Posterior cingulate gyrus (tissue), 11 donors: ENCODE measurements at regions of chr5 and their contacts with region 1.

Region 1: GRCh38 chr5:135887351-135887864 is 8.2 kb downstream of the IL9 start:
- DNase-seq: peak in 9 of 10 donors; percentile 29 to 93 (median 65)

Region 2: GRCh38 chr5:135821061-135821801 is 66.2 kb before region 1 on chr5:
- intact Hi-C with region 1: no loop called
- DNase-seq: peak in 1 of 10 donors; percentile 44

Region 3: DNA sequence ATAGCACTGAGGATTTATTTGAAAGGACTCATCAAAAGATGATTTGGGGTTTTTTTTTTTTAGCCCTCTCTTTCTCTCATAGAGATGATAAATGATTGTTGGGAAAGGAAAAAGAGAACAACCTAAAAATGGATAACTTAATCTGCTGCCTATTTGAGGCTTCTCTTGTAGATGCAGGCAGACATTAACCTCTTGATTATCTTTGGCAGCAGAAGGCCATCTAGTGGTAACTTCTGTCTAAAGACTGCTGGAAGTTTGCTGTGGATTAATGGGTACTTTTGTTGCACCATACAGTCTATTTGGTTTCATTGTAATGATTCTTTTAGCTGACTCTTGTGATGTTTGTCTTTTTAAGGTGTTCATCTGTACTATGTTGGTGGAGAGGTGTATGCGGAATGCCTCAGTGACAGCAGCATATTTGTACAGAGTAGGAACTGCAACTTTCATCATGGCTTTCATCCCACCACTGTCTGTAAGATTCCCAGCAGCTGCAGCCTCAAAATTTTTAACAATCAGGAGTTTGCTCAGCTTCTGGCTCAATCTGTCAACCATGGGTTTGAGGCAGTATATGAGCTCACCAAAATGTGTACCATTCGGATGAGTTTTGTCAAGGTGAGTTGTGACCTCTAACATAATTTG is 286.7 kb after region 1 on chr5:
- intact Hi-C with region 1: loop called (anchors 2 kb)
- DNase-seq: no peak

Region 4: DNA sequence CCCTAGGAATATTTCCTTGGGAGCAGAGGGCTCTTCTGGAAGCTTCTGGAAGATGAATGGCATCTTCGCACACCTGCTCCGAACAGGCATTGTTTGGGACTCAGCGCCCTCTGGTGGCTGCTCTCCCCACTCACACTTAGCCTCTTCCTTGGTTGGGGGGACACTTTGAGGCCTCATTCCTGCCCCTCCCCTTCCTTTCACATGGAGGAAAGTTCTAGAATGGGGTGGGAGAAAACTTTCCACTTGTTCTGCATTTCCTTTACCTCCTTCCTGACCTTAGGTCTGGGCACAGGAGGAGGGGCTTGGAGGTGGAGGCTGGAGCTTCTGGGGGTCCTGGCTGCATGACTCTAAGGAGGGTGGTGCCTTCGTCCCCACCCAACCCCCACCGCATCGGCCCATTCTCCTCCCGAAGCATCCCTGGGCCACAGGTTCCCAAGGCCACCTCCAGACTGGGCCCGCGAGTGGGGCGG is 324.9 kb after region 1 on chr5:
- intact Hi-C with region 1: loop called (anchors 2 kb)
- DNase-seq: peak in 7 of 10 donors; percentile 44 to 92 (median 52)